ENCODE measurements at regions of chr13 and their contacts with region 1.

Region 1: DNA sequence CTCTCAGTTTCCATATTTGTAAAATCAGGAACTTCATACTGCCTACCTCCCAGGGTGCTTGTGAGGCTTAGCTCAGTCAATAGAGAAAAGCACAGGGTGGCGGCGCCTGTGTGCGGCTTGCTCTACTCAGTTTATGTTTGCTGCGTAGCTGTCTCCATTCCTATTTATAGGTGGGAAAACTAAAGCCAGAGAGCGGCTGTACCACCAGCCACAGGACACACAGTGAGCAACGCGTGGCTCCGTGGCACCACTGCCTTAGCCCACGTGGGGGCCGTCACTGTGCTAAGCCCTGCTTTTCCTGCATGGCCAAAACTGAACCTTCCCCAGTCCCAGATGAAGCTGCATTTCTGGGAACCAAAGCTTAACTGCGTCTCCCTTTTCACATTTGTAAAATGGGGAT is 292.5 kb downstream of the TEX29 start:
- DNase-seq: no peak

Region 2: DNA sequence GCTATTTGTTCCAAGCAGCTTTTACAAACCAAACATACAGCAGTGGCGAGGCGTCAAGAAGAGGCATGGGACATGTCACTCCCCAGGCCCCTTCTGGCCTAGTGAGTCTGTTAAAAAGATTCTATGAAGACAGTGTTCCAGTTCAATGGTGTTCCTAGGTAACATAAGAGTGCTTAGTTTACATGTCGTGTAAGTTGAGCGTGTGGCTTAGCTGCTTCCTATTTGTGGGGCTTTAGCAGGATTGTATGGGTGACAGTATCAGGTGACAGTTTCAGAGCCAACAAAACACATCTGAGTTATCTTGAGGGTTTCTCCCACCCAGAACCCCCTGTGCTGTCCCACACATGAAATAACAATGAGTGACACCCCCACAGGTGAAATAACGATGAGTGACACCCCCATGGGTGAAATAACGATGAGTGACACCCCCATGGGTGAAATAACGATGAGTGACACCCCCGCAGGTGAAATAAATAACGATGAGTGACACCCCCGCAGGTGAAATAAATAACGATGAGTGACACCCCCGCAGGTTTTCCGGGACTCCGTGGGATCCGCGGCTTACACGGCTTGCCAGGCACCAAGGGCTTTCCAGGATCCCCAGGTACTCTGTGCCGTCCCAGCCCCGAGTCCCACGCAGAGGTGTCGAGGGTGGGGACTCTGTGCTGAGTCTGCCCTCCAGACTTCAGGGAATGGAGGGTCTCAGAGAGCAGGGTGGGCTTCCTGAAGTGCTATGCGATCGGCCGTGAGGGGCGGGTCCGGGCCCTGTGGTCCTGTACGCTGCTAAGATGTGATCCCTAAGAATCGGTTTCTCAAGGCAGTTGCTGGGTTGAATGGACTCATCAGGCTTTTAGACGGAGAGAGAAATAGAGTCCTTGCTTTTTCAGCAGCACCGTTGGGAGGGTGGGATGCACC is 1120.0 kb before region 1 on chr13:
- intact Hi-C with region 1: no loop called
- DNase-seq: no peak

Region 3: DNA sequence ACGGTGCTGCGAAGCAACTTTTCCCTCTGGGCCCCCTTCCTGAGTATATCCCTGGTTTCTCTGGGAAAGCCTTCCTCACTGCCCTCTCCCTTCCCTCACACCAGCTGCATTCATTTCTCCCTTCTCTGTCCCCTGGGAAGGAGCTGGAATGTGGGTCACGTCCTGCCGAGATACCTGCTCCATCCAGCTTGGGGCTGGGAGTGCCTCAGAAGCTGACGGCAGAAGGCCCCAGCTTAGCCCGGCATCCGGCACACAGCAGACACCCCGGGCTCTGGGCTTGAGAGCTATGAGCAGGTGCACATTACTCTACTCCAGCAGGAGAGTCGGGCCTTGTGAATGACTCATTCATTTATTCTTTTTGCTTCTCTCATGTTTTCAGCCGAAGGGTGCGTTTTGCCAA is 121.9 kb before region 1 on chr13:
- intact Hi-C with region 1: no loop called
- DNase-seq: peak; percentile 59

Region 4: DNA sequence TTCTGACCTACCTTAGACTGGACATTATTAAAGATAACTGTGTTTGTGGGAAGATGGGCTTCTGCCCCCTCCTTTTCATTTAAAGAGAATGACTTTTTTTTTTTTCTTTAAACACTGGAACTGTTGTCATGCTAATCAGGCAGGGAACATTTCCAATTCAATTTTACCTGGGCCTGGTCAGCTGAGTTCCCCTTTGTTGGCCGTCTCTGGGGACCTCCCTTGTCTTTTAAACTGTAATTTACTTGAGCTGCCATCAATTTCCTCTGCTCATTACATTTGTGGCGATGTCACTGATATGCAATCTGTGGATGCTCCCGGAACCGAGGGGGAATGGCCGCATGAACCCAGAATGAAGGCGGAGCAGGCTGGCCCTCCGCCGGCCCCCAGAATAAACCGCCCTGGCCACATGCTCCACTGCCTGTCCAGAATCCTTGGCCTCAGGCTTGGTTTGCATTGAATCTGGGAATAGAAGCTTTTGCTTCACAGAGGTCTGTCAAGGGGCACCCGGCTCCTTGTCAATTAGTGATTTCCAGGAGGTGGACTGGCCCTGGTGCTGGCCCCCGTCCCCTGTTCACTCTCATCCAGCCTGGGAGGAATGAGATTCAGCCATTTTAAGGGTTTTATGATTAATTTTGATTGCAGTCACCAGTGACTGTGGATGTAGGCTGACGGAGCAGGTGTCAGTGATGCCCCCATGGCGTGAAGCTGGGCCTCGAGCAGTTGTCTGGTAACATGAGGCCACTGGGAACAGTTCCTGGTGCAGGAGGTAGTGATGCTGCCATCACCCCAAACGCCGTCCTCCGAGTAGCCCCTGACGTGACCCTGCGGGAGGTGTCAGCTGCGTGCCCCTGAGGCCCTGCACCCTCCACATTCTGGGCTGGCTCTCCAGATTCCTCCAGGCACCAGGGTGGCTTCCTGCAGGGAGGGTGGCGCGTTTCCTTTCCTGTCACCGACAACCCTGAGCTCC is 15.6 kb before region 1 on chr13:
- intact Hi-C with region 1: no loop called
- DNase-seq: peak; percentile 70

Region 5: GRCh38 chr13:111640006-111640405 is 27.1 kb after region 1 on chr13:
- intact Hi-C with region 1: loop called in 1 of 2 experiments (anchors 1 kb)
- DNase-seq: no peak

Region 6: DNA sequence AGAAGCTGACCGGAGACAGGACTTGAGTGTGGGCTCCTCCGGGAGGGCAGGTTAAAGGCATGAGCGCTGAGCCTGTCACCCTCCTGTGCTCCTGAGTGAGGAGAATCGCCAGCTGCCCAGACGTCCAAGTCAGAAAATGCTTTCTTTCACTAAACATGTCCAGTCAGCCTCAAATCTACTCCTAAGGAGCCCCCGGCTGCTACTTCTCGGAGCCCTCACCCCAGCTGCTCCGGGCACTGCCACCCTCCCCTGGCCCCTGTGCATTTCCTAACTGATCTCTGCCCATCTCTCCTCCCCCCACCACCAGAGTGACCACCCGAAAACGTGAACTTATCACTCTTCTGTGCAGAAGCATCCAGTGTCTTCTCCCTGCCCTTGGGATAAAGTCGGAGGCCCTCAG is 176.5 kb after region 1 on chr13:
- intact Hi-C with region 1: no loop called
- DNase-seq: peak; percentile 45